ENCODE measurements at regions of chr3 and their contacts with region 1.

Region 1: DNA sequence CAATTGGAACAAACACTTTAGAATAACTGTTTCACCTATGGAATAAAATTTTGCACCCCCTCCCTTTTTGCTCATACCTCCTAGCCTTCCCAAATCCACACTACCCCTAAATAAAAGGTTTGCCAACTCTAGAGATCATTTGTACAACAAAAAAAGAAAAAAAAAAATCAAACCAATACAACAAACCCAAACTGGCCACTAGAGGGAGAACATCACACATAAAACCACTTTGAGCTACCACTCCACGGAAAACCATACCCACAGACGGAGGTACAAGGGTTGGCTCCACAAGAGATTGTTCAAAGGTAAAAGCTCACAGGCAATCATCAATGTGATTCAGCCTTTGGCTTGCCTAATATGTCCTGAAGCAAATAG is 47.6 kb downstream of the SETMAR start:
- DNase-seq: peak; percentile 37
- ATAC-seq: peak; percentile 69
- H3K4me3 ChIP-seq: no peak overlapping the region
- H3K27ac ChIP-seq: no peak overlapping the region
- H3K4me1 ChIP-seq: no peaks in the 10 kb centered on the region
- H3K27me3 ChIP-seq: no peaks in the 10 kb centered on the region
- CTCF ChIP-seq: peak; percentile 64 to 76 (median 70)
- POLR2A ChIP-seq: no peak
- RAD21 ChIP-seq: peak; percentile 80

Region 2: GRCh38 chr3:4340411-4341335 is 10.1 kb before region 1 on chr3:
- CTCF ChIA-PET with region 1: interaction called, 11 read pairs
- POLR2A ChIA-PET with region 1: no interaction called
- RAD21 ChIA-PET with region 1: no interaction called
- intact Hi-C with region 1: no loop called
- DNase-seq: no peak
- ATAC-seq: no peak
- H3K4me3 ChIP-seq: no peak overlapping the region
- H3K27ac ChIP-seq: no peak overlapping the region
- H3K4me1 ChIP-seq: no peaks in the 10 kb centered on the region
- H3K27me3 ChIP-seq: no peaks in the 10 kb centered on the region
- CTCF ChIP-seq: no peak
- POLR2A ChIP-seq: no peak
- RAD21 ChIP-seq: no peak

Region 3: DNA sequence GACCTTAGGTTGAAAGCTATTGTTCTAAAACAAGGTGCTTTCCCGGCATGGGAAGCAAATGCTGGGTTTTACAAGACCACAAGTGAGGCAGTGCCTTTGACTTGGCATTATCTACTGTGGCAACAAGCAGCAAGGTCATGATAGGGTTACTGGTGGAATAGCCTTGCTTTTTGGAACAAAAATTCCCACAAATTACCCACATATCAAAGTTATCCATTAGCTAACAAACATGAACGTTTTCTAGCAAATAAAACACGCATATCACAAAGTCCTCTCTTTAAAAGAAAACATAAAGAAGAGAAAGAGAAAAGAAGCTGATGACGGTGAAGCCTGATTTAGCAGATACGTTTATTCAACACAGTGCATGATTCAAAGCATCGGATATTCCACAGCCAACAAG is 10.0 kb after region 1 on chr3:
- CTCF ChIA-PET with region 1: interaction called, 11 read pairs
- POLR2A ChIA-PET with region 1: no interaction called
- RAD21 ChIA-PET with region 1: no interaction called
- intact Hi-C with region 1: no loop called
- DNase-seq: no peak
- ATAC-seq: no peak
- H3K4me3 ChIP-seq: no peak overlapping the region
- H3K27ac ChIP-seq: no peak overlapping the region
- H3K4me1 ChIP-seq: no peaks in the 10 kb centered on the region
- H3K27me3 ChIP-seq: no peaks in the 10 kb centered on the region
- CTCF ChIP-seq: no peak
- POLR2A ChIP-seq: no peak
- RAD21 ChIP-seq: no peak

Region 4: GRCh38 chr3:4546346-4547178 is 195.8 kb after region 1 on chr3:
- CTCF ChIA-PET with region 1: no interaction called
- POLR2A ChIA-PET with region 1: no interaction called
- RAD21 ChIA-PET with region 1: no interaction called
- intact Hi-C with region 1: no loop called
- DNase-seq: no peak
- ATAC-seq: no peak
- H3K4me3 ChIP-seq: no peak overlapping the region
- H3K27ac ChIP-seq: no peak overlapping the region
- H3K4me1 ChIP-seq: no peaks in the 10 kb centered on the region
- H3K27me3 ChIP-seq: peaks cover 5% of the 10 kb centered on the region; the same call in 1 of the 2 replicates
- CTCF ChIP-seq: no peak
- POLR2A ChIP-seq: no peak
- RAD21 ChIP-seq: no peak

Measured in HCT116 (cell line).